ENCODE measurements at regions of chr11 and their contacts with region 1.

Region 1: DNA sequence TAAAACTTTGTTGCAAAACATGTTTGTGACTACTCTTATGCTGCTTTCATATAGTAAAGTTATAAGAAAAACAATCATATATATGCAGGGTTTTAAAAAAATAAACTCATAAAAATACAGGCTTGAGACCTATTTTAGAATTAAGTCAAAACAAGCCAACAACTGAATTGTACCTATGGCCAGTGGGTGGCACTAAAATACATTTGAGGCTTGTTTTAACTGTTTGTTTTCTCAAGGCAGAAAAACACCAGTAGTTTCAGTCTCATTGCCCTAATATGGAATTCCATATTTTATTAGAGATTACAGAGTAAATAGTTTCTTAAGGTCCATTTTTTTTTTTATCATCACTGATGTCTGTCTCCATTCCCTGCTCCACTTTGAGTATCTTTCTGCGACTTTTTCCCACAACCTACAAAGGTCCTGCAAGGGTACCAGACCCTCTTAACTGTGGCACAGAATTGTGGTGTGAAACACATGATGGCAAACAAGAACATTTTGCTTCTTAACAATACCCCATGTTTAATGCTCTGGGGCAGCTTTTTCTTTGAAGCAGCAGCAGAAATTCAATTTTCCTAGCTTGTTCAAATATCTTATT is 8.5 kb upstream of the CCDC89 start:
- DNase-seq: peak; percentile 73
- H3K4me3 ChIP-seq: no peak overlapping the region
- H3K27ac ChIP-seq: no peak overlapping the region
- H3K4me1 ChIP-seq: peaks cover 21% of the 10 kb centered on the region
- H3K27me3 ChIP-seq: no peaks in the 10 kb centered on the region

Region 2: DNA sequence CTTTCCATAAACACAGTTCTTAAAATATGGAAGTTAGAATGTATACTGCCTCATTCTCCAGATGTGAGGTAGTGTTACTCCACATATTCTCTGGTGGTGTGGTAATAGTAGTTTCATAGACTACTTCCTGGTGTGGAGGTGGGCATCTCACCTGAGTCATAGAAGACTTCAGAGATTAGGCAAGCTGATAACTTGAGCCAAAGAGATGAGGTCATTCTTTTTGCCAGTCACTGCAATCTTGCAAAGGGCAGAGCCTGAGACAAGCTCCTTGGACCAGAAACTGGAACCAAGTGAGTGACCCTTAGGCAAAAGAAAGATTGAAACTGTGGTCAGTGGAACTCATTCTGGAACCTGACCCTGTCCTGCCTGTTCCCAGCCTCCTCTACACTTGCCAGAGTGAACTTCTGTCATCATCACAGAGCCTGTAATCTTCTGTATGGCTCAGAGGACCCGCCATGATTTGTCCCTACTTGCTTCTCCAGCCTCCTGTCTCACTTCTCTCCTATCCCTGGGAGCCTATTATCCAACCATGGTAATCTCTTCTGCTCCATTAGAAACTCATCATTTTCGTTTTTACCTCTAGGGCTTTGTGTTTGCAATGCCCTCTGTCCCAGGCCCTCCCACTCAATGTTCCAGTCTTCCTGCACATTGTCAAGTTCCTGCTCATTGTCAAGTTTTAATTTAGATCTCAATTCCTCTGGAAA is 150.1 kb after region 1 on chr11:
- in situ Hi-C with region 1: loop called (anchors 10 kb)
- DNase-seq: peak; percentile 82
- H3K4me3 ChIP-seq: no peak overlapping the region
- H3K27ac ChIP-seq: peak overlapping the region; percentile 25
- H3K4me1 ChIP-seq: peaks cover 16% of the 10 kb centered on the region
- H3K27me3 ChIP-seq: no peaks in the 10 kb centered on the region

Region 3: GRCh38 chr11:86091566-86091965 is 397.1 kb after region 1 on chr11:
- in situ Hi-C with region 1: no loop called
- DNase-seq: peak; percentile 93
- H3K4me3 ChIP-seq: 0 out of 2 replicates have a peak overlapping the region, but pooled peaks have one; percentile 6
- H3K27ac ChIP-seq: peak overlapping the region; percentile 81
- H3K4me1 ChIP-seq: peaks cover 32% of the 10 kb centered on the region
- H3K27me3 ChIP-seq: no peaks in the 10 kb centered on the region

Measured in GM23248 (cell line).